ENCODE measurements at regions of chr3 and their contacts with region 1.

Region 1: DNA sequence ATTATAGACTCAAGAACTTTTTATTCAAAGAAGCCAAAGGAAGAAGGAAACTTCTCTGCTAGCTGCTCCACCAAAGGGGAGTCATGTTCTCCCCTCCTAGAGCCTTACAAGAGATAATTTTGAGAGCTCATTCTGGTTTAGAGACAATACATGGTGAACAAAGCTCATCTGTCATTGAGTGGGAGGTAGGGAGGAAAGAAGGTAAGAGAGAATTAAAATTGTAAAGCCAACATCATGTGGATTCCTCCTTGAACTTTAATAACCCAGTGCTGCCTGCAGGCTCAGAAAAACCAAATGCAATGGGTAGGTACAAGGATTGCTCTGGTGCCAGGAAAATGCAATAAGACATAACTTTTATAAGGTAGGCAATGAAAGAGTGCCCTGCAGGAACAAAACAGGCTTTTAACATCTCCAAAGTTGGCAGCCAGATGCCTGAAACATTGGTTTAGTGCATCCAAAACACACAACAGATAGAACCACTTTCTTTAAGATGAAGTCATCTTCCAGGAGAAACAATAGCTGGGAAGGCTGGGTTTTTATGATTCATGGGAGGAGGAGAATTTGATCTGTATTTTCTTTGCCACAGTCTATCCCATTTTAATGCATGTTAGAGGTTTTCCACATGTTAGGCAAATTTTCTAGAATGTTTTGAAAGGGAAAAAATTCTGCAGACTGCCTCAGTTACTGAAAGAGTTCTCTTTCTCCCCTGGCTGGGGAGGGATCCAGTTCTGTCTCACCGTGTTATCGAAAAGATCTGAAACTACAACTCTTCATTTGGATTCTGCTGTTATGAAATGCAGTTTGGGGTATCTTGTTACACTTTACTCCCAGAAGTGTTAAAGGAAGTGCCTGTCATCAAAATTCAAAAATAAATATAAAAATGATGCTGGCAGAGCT is 11.3 kb upstream of the ARHGEF3 start:
- DNase-seq: no peak

Region 2: DNA sequence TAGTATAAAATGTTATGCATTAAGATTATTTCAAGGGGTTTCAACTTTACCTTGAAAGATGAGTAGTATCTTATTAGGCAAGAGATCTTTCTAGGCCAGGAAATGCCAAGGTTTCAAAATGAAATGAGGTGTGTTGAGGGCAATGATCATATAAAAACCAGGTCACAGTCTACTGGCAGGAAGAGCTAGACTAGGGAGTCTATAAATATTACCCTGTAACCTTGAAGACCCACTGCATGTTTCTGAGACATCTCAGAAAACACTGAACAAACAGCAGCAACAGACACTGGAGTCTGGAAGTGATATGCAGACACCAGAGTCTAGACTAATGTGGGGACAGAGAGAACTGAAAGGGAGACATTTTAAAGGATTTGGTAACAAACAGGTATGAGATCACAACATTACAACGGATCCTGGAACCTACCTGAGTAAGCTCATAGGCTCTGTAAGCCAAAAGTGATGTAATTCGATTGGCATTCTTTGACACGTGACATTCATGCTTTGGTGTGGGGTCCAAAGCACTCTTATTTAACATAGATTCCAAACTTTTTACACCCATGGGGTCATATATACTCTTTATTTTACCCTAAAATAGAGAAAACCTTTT is 144.9 kb before region 1 on chr3:
- intact Hi-C with region 1: no loop called
- DNase-seq: no peak

Region 3: GRCh38 chr3:56923521-56924224 is 110.7 kb after region 1 on chr3:
- intact Hi-C with region 1: loop called (anchors 10 kb)
- DNase-seq: no peak